Naive thymus-derived CD4-positive, alpha-beta T cell (primary cell): ENCODE measurements at regions of chr9 and their contacts with region 1.

Region 1: DNA sequence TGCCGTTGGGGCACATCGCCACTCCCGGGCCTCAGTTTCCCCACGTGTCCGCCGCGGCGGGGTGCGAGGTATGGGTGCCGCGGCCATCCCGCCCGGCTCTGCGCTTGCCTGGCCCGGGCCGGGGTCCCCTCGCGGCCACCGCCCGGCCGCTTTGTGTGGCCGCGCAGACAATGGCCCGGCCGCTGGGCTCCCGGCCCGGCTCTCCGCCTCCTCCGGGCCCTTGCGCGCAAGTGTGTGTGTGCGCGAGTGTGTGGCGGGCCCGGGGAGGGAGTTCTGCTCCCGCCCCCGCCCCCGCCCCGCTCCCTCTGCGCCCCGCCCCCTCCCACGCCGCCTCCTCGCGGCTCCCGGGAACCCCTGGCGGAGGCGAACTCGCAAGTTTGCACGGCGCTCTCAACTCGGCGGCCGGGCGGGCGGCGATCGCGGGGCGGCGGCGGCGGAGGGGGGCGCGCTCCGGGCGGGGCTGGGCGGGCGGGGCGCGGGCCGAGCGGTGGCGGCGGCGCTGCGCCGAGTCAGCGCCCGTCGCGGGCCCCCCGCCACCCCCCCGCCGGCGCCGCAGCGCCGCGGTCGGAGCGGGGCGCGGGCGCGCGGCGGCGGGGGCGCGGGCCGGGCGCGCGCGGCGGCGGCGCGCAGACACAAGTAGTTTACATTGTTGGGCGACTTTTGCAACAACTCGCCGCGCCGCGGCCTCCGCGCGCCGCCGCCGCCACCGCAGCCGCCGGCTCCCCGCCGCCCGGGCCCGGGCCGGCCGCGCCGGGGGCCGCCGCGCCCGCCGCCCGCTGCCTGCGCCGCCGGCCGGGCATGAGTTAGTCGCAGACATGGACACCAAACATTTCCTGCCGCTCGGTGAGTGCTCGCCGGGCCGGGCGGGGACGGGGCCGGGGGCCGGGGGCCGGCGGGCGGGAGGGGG is at the start of gene RXRA:
- DNase-seq: peak; percentile 42 to 73 (median 61)
- ATAC-seq: peak; percentile 85
- H3K4me3 ChIP-seq: peak within 1 kb of the TSS; percentile 73
- H3K4me3 Mint-ChIP-seq: peak within 1 kb of the TSS; percentile 54 to 86 (median 75)
- H3K27ac ChIP-seq: peak within 1 kb of the TSS; percentile 62
- H3K27ac Mint-ChIP-seq: peak within 1 kb of the TSS in 5 of 9 donors; percentile 16 to 68 (median 47)
- H3K4me1 ChIP-seq: peaks cover 4 to 10% of the 10 kb centered on the region in 2 donors
- H3K4me1 Mint-ChIP-seq: peaks cover 0 to 17% (median 11%) of the 10 kb centered on the region in 7 donors
- H3K27me3 ChIP-seq: no peaks in the 10 kb centered on the region
- H3K27me3 Mint-ChIP-seq: peaks cover 0 to 52% (median 0%) of the 10 kb centered on the region in 5 donors
- total RNA-seq, gene RXRA: 5.9 to 59.5 (median 8.6) TPM

Region 2: DNA sequence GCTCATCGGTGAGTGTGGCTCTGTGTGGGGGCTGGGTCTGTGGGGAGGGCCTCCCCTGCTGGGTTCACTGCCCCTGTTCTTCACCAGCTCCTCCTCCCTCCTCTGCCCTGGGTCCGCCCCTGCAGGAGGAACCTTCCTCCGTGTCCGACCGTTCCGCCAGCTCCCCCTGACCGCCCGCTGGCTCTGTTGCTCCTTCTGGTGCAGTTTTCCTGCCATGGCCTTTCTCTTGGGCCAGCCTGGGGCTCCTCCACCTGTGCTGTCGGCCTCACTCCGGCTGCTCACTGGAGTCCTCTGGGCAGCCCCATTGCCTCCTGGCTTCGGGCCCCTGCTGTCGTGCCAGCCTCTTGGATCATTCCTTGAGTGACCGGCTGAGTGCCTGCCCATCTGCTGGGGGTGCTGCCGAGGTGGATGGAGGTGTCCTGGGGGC is 174.0 kb before region 1 on chr9:
- CTCF ChIA-PET with region 1: no interaction called
- POLR2A ChIA-PET with region 1: no interaction called
- intact Hi-C with region 1: no loop called
- DNase-seq: no peak
- ATAC-seq: no peak
- H3K4me3 ChIP-seq: no peak overlapping the region
- H3K4me3 Mint-ChIP-seq: no peak overlapping the region
- H3K27ac ChIP-seq: no peak overlapping the region
- H3K27ac Mint-ChIP-seq: no peak overlapping the region
- H3K4me1 ChIP-seq: no peaks in the 10 kb centered on the region
- H3K4me1 Mint-ChIP-seq: peaks cover 0 to 3% (median 0%) of the 10 kb centered on the region in 7 donors
- H3K27me3 ChIP-seq: no peaks in the 10 kb centered on the region
- H3K27me3 Mint-ChIP-seq: no peaks in the 10 kb centered on the region

Region 3: GRCh38 chr9:134171316-134172197 is 154.5 kb before region 1 on chr9:
- CTCF ChIA-PET with region 1: no interaction called
- POLR2A ChIA-PET with region 1: no interaction called
- intact Hi-C with region 1: loop called in 1 of 2 experiments (anchors 1 kb)
- DNase-seq: no peak
- ATAC-seq: no peak
- H3K4me3 ChIP-seq: no peak overlapping the region
- H3K4me3 Mint-ChIP-seq: no peak overlapping the region
- H3K27ac ChIP-seq: no peak overlapping the region
- H3K27ac Mint-ChIP-seq: peak overlapping the region in 2 of 9 donors; percentile 33 to 59
- H3K4me1 ChIP-seq: no peaks in the 10 kb centered on the region
- H3K4me1 Mint-ChIP-seq: peaks cover 0 to 2% (median 0%) of the 10 kb centered on the region in 7 donors
- H3K27me3 ChIP-seq: no peaks in the 10 kb centered on the region
- H3K27me3 Mint-ChIP-seq: no peaks in the 10 kb centered on the region

Region 4: DNA sequence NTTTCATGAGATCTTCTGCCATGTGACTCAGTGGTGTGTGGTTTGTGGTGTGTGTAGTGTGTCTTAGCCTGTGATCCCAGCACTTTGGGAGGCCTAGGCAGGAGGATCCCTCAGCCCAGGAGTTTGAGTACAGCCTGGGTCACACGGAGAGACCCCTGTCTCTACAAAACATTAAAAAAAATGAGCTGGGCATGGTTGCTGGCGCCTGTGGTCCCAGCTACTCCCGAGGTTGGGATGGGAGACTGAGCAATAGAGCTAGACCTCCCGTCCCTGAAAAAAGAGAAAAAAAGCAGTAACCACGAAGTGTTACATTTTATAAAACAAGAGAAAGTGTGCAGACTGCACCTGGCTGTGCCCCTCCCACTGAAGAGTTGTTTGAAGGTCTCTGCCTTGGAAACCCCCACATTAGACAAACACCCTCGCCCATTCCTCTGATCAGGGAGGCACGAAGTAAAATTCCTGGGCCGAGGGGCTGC is 140.5 kb before region 1 on chr9:
- CTCF ChIA-PET with region 1: no interaction called
- POLR2A ChIA-PET with region 1: no interaction called
- intact Hi-C with region 1: loop called in 1 of 2 experiments (anchors 5 kb)
- DNase-seq: peak in 4 of 9 donors; percentile 27 to 40 (median 32)
- ATAC-seq: peak; percentile 81
- H3K4me3 ChIP-seq: no peak overlapping the region
- H3K4me3 Mint-ChIP-seq: peak overlapping the region in 7 of 10 donors; percentile 29 to 48 (median 40)
- H3K27ac ChIP-seq: peak overlapping the region; percentile 14
- H3K27ac Mint-ChIP-seq: peak overlapping the region in 8 of 9 donors; percentile 63 to 88 (median 82)
- H3K4me1 ChIP-seq: peaks cover 7 to 25% of the 10 kb centered on the region in 2 donors
- H3K4me1 Mint-ChIP-seq: peaks cover 19 to 30% (median 23%) of the 10 kb centered on the region in 7 donors
- H3K27me3 ChIP-seq: no peaks in the 10 kb centered on the region
- H3K27me3 Mint-ChIP-seq: peaks cover 0 to 3% (median 0%) of the 10 kb centered on the region in 5 donors

Region 5: GRCh38 chr9:134243778-134244467 is 82.1 kb before region 1 on chr9:
- CTCF ChIA-PET with region 1: no interaction called
- POLR2A ChIA-PET with region 1: no interaction called
- intact Hi-C with region 1: loop called in 1 of 2 experiments (anchors 2 kb)
- DNase-seq: peak in 7 of 9 donors; percentile 7 to 64 (median 46)
- ATAC-seq: peak; percentile 97
- H3K4me3 ChIP-seq: no peak overlapping the region
- H3K4me3 Mint-ChIP-seq: peak overlapping the region in 9 of 10 donors; percentile 27 to 74 (median 59)
- H3K27ac ChIP-seq: peak overlapping the region; percentile 38
- H3K27ac Mint-ChIP-seq: peak overlapping the region; percentile 3 to 90 (median 61)
- H3K4me1 ChIP-seq: peaks cover 0 to 13% of the 10 kb centered on the region in 2 donors
- H3K4me1 Mint-ChIP-seq: peaks cover 6 to 28% (median 19%) of the 10 kb centered on the region in 7 donors
- H3K27me3 ChIP-seq: no peaks in the 10 kb centered on the region
- H3K27me3 Mint-ChIP-seq: peaks cover 0 to 11% (median 0%) of the 10 kb centered on the region in 5 donors

Region 6: GRCh38 chr9:134378901-134379338 is 52.9 kb after region 1 on chr9:
- CTCF ChIA-PET with region 1: no interaction called
- POLR2A ChIA-PET with region 1: no interaction called
- intact Hi-C with region 1: no loop called
- DNase-seq: no peak
- ATAC-seq: no peak
- H3K4me3 ChIP-seq: no peak overlapping the region
- H3K4me3 Mint-ChIP-seq: no peak overlapping the region
- H3K27ac ChIP-seq: no peak overlapping the region
- H3K27ac Mint-ChIP-seq: no peak overlapping the region
- H3K4me1 ChIP-seq: peaks cover 13 to 29% of the 10 kb centered on the region in 2 donors
- H3K4me1 Mint-ChIP-seq: peaks cover 7 to 36% (median 25%) of the 10 kb centered on the region in 7 donors
- H3K27me3 ChIP-seq: no peaks in the 10 kb centered on the region
- H3K27me3 Mint-ChIP-seq: peaks cover 0 to 2% (median 0%) of the 10 kb centered on the region in 5 donors

Region 7: GRCh38 chr9:134391314-134392231 is 65.5 kb after region 1 on chr9:
- CTCF ChIA-PET with region 1: interaction called, 3 read pairs
- POLR2A ChIA-PET with region 1: interaction called, 3 read pairs
- intact Hi-C with region 1: loop called in 1 of 2 experiments (anchors 5 kb)
- DNase-seq: peak in 8 of 9 donors; percentile 43 to 85 (median 48)
- ATAC-seq: peak; percentile 72
- H3K4me3 ChIP-seq: peak overlapping the region; percentile 40
- H3K4me3 Mint-ChIP-seq: peak overlapping the region; percentile 61 to 80 (median 74)
- H3K27ac ChIP-seq: peak overlapping the region; percentile 79
- H3K27ac Mint-ChIP-seq: peak overlapping the region; percentile 75 to 96 (median 92)
- H3K4me1 ChIP-seq: peaks cover 50 to 51% of the 10 kb centered on the region in 2 donors
- H3K4me1 Mint-ChIP-seq: peaks cover 31 to 62% (median 48%) of the 10 kb centered on the region in 7 donors
- H3K27me3 ChIP-seq: no peaks in the 10 kb centered on the region
- H3K27me3 Mint-ChIP-seq: peaks cover 0 to 9% (median 0%) of the 10 kb centered on the region in 5 donors

Region 8: GRCh38 chr9:134455934-134456739 is 130.1 kb after region 1 on chr9:
- CTCF ChIA-PET with region 1: no interaction called
- POLR2A ChIA-PET with region 1: no interaction called
- intact Hi-C with region 1: loop called in 1 of 2 experiments (anchors 5 kb)
- DNase-seq: peak; percentile 57 to 87 (median 80)
- ATAC-seq: peak; percentile 91
- H3K4me3 ChIP-seq: peak overlapping the region; percentile 63
- H3K4me3 Mint-ChIP-seq: peak overlapping the region; percentile 66 to 96 (median 84)
- H3K27ac ChIP-seq: peak overlapping the region; percentile 84
- H3K27ac Mint-ChIP-seq: peak overlapping the region; percentile 79 to 99 (median 95)
- H3K4me1 ChIP-seq: peaks cover 10 to 20% of the 10 kb centered on the region in 2 donors
- H3K4me1 Mint-ChIP-seq: peaks cover 0 to 19% (median 11%) of the 10 kb centered on the region in 7 donors
- H3K27me3 ChIP-seq: no peaks in the 10 kb centered on the region
- H3K27me3 Mint-ChIP-seq: no peaks in the 10 kb centered on the region